Activated CD8-positive, alpha-beta T cell treated with anti-CD3 and anti-CD28 coated beads, Interleukin-2, amount 10 ng/mL, durations not matched to agents 7 days and 5 days (primary cell): ENCODE measurements at regions of chr17 and their contacts with region 1.

Region 1: DNA sequence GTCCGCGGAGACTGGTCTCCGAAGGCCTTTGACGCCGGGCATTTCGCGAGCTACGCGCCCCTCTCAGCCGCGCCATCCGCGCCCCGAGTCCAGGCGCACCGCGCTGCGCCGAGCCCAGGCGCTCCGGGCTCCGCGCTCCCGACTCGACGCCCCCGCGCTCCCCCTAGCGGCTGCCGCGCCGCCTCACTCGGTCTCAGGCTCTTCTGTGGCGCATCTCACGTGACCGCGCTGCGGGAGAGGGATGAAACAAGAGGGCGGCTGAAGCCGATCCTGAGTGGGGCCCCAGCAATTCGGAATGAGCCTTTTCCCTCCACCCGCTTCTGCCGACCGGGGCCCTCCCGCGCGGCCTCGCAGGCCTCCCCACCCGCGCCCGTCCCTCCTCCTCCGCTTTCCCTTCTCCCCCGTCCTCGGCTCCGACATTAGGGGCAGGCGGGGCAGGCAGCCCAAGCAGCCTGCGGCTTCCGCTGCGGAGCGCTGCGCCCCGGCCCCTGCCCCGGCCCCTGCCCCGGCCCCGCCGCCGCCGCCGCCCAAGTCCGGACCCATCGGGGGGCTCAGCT is 42.5 kb upstream of the AMZ2 start:
- DNase-seq: peak; percentile 95
- ATAC-seq: peak; percentile 87
- H3K4me3 Mint-ChIP-seq: peak overlapping the region; percentile 85
- H3K27ac Mint-ChIP-seq: peak overlapping the region; percentile 89
- H3K4me1 Mint-ChIP-seq: peaks cover 42% of the 10 kb centered on the region
- H3K27me3 Mint-ChIP-seq: peaks cover 4% of the 10 kb centered on the region

Region 2: GRCh38 chr17:68057531-68057952 is 147.8 kb before region 1 on chr17:
- CTCF ChIA-PET with region 1: interaction called, 30 read pairs
- POLR2A ChIA-PET with region 1: no interaction called
- DNase-seq: peak; percentile 67
- ATAC-seq: peak; percentile 86
- H3K4me3 Mint-ChIP-seq: no peak overlapping the region
- H3K27ac Mint-ChIP-seq: no peak overlapping the region
- H3K4me1 Mint-ChIP-seq: peaks cover 17% of the 10 kb centered on the region
- H3K27me3 Mint-ChIP-seq: peaks cover 3% of the 10 kb centered on the region

Region 3: DNA sequence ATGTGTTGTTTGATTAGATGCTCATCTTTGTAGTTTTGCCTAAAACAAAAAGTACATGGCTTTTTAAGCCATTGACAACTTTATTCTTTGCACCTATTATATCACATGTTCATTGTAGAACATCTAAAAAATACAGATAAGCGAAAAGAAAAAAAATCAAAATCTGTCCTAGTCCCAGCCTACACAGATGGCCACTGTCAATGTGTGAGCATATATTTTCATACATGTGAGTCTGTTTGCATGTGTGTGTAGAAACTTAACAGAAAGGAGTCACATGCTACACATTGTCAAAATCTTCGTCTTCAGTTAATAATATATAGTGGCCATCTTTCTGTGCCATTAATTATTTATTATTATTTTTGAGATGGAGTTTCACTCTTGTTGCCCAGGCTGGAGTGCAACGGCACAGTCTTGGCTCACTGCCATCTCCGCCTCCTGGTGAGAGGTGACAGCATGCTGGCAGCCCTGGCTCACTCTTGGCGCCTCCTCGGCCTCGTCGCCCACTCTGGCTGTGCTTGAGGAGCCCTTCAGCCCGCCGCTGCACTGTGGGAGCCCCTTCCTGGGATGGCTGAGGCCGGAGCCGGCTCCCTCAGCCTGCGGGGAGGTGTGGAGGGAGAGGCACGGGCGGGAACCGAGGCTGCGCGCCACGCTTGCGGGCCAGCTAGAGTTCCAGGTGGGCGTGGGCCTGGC is 25.9 kb before region 1 on chr17:
- CTCF ChIA-PET with region 1: interaction called, 82 read pairs
- POLR2A ChIA-PET with region 1: interaction called, 21 read pairs
- DNase-seq: peak; percentile 17
- ATAC-seq: no peak
- H3K4me3 Mint-ChIP-seq: no peak overlapping the region
- H3K27ac Mint-ChIP-seq: no peak overlapping the region
- H3K4me1 Mint-ChIP-seq: peaks cover 59% of the 10 kb centered on the region
- H3K27me3 Mint-ChIP-seq: no peaks in the 10 kb centered on the region

Region 4: DNA sequence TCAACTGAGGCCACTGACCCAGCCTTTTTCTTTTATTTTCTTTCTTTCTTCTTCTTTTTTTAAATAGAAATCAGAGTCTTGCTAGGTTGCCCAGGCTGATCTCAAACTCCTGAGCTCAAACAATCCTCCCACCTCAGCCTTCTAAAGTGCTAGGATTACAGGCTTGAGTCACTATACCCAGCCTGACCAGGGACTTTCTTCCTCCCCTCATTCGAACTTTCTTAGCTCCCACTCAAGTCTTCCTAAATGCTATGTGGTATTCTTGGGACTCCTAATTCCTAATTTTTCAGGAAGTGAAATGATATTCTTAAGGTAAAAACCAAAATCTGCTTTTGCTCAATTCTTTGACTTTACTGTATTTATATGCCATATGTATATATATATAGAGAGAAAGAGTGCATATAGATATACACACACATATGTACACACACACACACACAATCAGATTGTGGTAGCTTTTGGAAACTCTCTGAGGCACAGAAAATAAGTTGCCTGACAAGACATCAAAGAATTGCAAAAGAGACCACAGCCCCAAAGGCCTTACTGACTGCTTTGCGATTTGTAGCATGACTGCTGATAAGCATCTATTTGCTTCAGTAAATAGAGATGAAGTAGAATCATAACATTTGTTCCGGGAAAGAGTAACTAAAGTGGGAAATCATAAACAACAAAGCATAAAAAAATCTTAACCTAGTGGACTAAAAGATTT is 33.0 kb after region 1 on chr17:
- CTCF ChIA-PET with region 1: interaction called, 24 read pairs
- POLR2A ChIA-PET with region 1: interaction called, 13 read pairs
- DNase-seq: peak; percentile 58
- ATAC-seq: peak; percentile 61
- H3K4me3 Mint-ChIP-seq: peak overlapping the region; percentile 76
- H3K27ac Mint-ChIP-seq: peak overlapping the region; percentile 98
- H3K4me1 Mint-ChIP-seq: peaks cover 54% of the 10 kb centered on the region
- H3K27me3 Mint-ChIP-seq: no peaks in the 10 kb centered on the region

Region 5: DNA sequence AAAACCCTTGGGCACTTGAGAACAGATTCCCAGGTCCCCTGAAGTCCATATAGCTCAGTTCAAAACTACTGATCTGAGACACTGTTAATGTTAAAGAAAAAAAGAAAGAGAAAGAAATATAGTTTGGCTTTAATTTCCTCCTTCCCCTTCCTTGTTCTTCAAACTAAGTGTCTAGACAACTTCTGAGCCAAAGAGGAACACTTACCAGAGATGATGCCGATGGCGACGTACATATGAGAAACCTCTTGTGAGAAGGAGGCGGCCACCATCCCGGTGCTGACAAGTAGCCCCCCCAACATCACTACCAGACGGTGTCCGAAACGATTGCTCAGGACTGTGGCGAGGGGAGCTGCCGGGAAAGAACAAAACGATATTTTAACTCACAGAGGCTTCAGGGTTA is 68.4 kb after region 1 on chr17:
- CTCF ChIA-PET with region 1: no interaction called
- POLR2A ChIA-PET with region 1: no interaction called
- DNase-seq: no peak
- ATAC-seq: no peak
- H3K4me3 Mint-ChIP-seq: no peak overlapping the region
- H3K27ac Mint-ChIP-seq: peak overlapping the region; percentile 32
- H3K4me1 Mint-ChIP-seq: no peaks in the 10 kb centered on the region
- H3K27me3 Mint-ChIP-seq: no peaks in the 10 kb centered on the region

Region 6: GRCh38 chr17:68457539-68458259 is 252.4 kb after region 1 on chr17:
- CTCF ChIA-PET with region 1: interaction called, 126 read pairs
- POLR2A ChIA-PET with region 1: interaction called, 17 read pairs
- DNase-seq: peak; percentile 98
- ATAC-seq: peak; percentile 95
- H3K4me3 Mint-ChIP-seq: peak overlapping the region; percentile 77
- H3K27ac Mint-ChIP-seq: peak overlapping the region; percentile 88
- H3K4me1 Mint-ChIP-seq: peaks cover 82% of the 10 kb centered on the region
- H3K27me3 Mint-ChIP-seq: no peaks in the 10 kb centered on the region